A549 (cell line): ENCODE measurements at regions of chr17 and their contacts with region 1.

Region 1: DNA sequence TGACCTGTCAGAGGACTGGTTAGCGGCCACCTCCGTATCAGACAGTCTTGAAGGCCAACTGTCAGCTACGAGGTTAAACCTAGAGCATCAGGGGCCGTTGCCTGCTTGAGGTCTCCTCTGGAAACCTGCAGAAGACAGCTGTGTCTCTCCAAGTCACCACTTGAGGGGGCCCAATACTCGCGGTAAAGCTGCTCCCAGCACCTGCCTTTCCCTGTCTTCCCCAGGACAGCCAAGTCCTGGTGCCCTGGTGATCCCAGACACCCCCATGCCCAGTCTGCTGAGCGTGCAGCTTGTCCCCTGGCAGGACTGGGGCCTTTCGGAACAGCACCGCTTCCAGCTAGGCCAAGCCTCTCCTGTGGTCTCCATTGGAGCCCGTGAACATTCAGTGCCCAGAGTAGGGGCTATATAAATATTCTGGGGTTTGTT is 80.1 kb downstream of the DNAH17 start:
- DNase-seq: peak; percentile 94 to 97
- ATAC-seq: peak; percentile 87 to 95
- H3K4me3 ChIP-seq: no peak overlapping the region
- H3K27ac ChIP-seq: peak overlapping the region; percentile 86 to 91
- H3K4me1 ChIP-seq: peaks cover 32% of the 10 kb centered on the region
- CTCF ChIP-seq: peak; percentile 99
- EP300 ChIP-seq: peak in 1 of 2 experiments; percentile 17; a peak in 1 of 5 replicates
- POLR2A ChIP-seq: no peak
- RAD21 ChIP-seq: peak; percentile 100

Region 2: GRCh38 chr17:78517421-78517820 is 20.3 kb after region 1 on chr17:
- CTCF ChIA-PET with region 1: interaction called, 15 read pairs
- POLR2A ChIA-PET with region 1: no interaction called
- DNase-seq: no peak
- ATAC-seq: no peak
- H3K4me3 ChIP-seq: no peak overlapping the region
- H3K27ac ChIP-seq: peak overlapping the region in 1 of 2 experiments; percentile 21; a peak in 1 of 6 replicates
- H3K4me1 ChIP-seq: no peaks in the 10 kb centered on the region
- CTCF ChIP-seq: no peak
- EP300 ChIP-seq: no peak
- POLR2A ChIP-seq: no peak
- RAD21 ChIP-seq: no peak

Region 3: GRCh38 chr17:78592991-78593329 is 95.8 kb after region 1 on chr17:
- CTCF ChIA-PET with region 1: interaction called, 126 read pairs
- POLR2A ChIA-PET with region 1: interaction called, 7 read pairs
- DNase-seq: peak in 1 of 2 experiments; percentile 42
- ATAC-seq: peak in 1 of 2 experiments; percentile 45; a peak in 3 of 6 replicates
- H3K4me3 ChIP-seq: peak overlapping the region; percentile 9; the same call in 1 of the 3 replicates
- H3K27ac ChIP-seq: peak overlapping the region; percentile 94 to 99
- H3K4me1 ChIP-seq: peaks cover 77% of the 10 kb centered on the region
- CTCF ChIP-seq: no peak
- EP300 ChIP-seq: no peak
- POLR2A ChIP-seq: no peak
- RAD21 ChIP-seq: no peak

Region 4: GRCh38 chr17:78697554-78698343 is 200.6 kb after region 1 on chr17:
- CTCF ChIA-PET with region 1: interaction called, 16 read pairs
- POLR2A ChIA-PET with region 1: no interaction called
- DNase-seq: no peak
- ATAC-seq: no peak
- H3K4me3 ChIP-seq: no peak overlapping the region
- H3K27ac ChIP-seq: peak overlapping the region in 1 of 2 experiments; percentile 30; a peak in 2 of 6 replicates
- H3K4me1 ChIP-seq: no peaks in the 10 kb centered on the region
- CTCF ChIP-seq: no peak
- EP300 ChIP-seq: no peak
- POLR2A ChIP-seq: no peak
- RAD21 ChIP-seq: no peak

Region 5: GRCh38 chr17:78736526-78737079 is 239.5 kb after region 1 on chr17:
- CTCF ChIA-PET with region 1: interaction called, 60 read pairs
- POLR2A ChIA-PET with region 1: no interaction called
- DNase-seq: peak; percentile 89 to 92
- ATAC-seq: peak; percentile 97 to 99
- H3K4me3 ChIP-seq: peak overlapping the region; percentile 61
- H3K27ac ChIP-seq: peak overlapping the region; percentile 72 to 85
- H3K4me1 ChIP-seq: peaks cover 32% of the 10 kb centered on the region
- CTCF ChIP-seq: no peak
- EP300 ChIP-seq: no peak
- POLR2A ChIP-seq: peak; percentile 38
- RAD21 ChIP-seq: no peak

Region 6: GRCh38 chr17:78798695-78799559 is 301.8 kb after region 1 on chr17:
- CTCF ChIA-PET with region 1: interaction called, 11 read pairs
- POLR2A ChIA-PET with region 1: no interaction called
- DNase-seq: peak in 1 of 2 experiments; percentile 45
- ATAC-seq: peak; percentile 35 to 66; a peak in 4 of 6 replicates
- H3K4me3 ChIP-seq: no peak overlapping the region
- H3K27ac ChIP-seq: peak overlapping the region in 1 of 2 experiments; percentile 33; a peak in 1 of 6 replicates
- H3K4me1 ChIP-seq: no peaks in the 10 kb centered on the region
- CTCF ChIP-seq: peak; percentile 52
- EP300 ChIP-seq: no peak
- POLR2A ChIP-seq: 0 out of 2 replicates have a peak, but pooled peaks have one; percentile 3
- RAD21 ChIP-seq: peak; percentile 27 to 41; a peak in 1 of 5 replicates